PC-9 (cell line): ENCODE measurements at regions of chr20 and their contacts with region 1.

Region 1: DNA sequence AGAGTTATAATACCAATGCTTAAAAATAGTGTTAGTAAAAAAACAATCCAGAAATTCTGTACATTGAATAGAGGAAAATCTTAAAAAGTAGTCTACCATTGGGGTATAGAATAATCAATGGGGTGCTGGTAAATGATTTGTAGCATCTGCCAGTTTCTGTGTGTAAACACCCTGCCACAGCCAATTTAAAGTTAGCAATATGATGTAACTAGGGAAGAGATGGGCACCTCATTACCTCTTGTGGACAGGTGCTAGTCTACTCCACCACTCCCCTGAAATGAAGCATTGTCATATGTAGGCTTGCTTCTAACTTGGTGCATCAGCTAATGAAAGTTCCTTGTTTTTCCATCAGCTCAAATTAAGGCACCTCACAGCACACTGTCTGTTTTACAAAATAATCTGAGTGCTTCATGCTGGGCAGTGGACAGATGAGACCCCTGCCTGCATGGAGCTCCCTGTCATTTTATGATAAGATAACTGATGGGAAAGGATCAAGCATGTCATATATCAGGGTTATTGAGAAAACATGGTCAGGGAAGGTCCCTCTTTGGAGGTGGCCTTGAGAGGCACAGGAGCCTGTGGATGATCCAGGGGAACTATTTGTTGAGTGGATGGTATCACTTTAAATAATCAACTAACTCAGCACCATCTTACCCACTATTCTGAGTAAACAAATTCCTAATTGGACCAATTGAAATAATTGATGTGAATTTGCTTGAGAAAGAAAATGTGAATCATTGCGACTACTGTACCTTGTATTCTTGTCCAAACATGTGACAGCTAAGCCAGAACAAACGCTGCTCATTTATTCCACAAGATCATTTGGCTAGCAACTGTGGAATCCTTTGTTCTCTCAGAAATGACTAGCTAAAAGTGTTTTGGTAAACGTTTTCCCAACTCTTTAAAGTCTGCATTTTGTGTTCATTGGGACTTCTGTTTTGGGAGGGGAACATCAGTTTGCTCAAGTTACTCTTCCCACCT is 45.9 kb upstream of the CSE1L start:
- DNase-seq: no peak
- H3K4me3 ChIP-seq: no peak overlapping the region
- H3K27ac ChIP-seq: no peak overlapping the region
- H3K4me1 ChIP-seq: no peaks in the 10 kb centered on the region
- H3K27me3 ChIP-seq: no peaks in the 10 kb centered on the region
- CTCF ChIP-seq: no peak

Region 2: DNA sequence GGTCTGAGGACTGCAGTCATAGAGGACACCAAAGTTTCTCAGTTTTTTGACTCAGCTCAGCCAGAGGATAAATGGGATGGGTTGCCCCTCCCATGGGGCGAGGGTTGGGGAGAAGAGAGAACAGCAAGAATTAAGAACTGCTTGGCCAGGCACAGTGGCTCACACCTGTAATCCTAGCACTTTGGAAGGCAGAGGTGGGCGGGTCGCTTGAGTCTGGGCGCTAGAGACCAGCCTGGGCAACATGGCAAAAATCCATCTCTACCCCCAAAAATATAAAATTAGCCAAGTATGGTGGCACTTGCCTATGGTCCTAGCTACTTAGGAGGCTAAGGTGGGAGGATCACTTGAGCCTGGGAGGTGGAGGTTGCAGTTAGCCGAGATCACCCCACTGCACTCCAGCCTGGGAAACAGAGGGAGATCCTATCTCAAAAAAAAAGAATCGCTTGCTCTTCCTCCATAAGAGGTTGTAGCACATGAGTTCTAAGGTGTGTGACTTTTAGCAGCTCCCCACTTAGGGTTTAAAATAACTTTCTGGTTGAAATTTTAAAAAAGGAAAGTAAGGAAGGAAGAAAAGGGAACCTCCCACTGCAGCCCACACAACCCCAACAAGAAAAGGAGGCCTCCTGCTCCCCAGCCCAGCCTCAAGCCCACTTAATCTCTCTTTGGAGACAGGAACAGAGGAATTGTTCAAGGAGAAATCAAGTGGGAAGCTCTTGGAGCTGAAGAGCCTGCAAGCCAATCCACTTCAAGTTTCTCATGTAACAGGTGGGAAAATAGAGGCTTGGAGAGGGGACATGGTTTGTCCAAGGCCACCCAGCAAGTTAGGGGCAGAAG is 133.5 kb before region 1 on chr20:
- CTCF ChIA-PET with region 1: no interaction called
- POLR2A ChIA-PET with region 1: no interaction called
- intact Hi-C with region 1: no loop called
- DNase-seq: no peak
- H3K4me3 ChIP-seq: no peak overlapping the region
- H3K27ac ChIP-seq: no peak overlapping the region
- H3K4me1 ChIP-seq: 0 out of 2 replicates have a peak, but pooled peaks cover 5% of the 10 kb centered on the region
- H3K27me3 ChIP-seq: no peaks in the 10 kb centered on the region
- CTCF ChIP-seq: no peak

Region 3: DNA sequence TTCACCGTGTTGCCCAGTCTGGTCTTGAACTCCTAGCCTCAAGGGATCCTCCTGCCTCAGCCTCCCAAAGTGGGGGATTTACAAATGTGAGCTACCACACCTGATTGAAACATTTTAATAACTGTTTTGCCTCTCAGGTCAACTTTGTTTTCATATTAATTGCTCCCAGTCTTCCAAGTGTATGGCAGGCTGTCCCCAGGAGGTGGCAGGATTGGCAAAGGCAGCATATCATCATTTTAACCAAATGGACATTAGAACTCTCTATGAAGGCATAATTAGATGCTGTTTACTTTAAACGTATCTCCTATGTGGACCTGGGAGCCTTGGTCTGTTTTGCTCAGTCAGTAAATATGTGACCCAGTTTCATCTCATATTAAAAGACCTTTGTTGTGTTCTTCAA is 13.3 kb before region 1 on chr20:
- CTCF ChIA-PET with region 1: interaction called, 13 read pairs
- POLR2A ChIA-PET with region 1: no interaction called
- intact Hi-C with region 1: no loop called
- DNase-seq: no peak
- H3K4me3 ChIP-seq: no peak overlapping the region
- H3K27ac ChIP-seq: no peak overlapping the region
- H3K4me1 ChIP-seq: peaks cover 18% of the 10 kb centered on the region
- H3K27me3 ChIP-seq: no peaks in the 10 kb centered on the region
- CTCF ChIP-seq: peak; percentile 65